WTC11 (cell line): ENCODE measurements at regions of chr17 and their contacts with region 1.

Region 1: GRCh38 chr17:35127751-35128514 is 6.5 kb downstream of the FNDC8 start:
- DNase-seq: no peak
- ATAC-seq: no peak
- H3K4me3 Mint-ChIP-seq: no peak overlapping the region
- H3K27ac Mint-ChIP-seq: no peak overlapping the region
- H3K4me1 Mint-ChIP-seq: no peaks in the 10 kb centered on the region
- H3K27me3 Mint-ChIP-seq: peaks cover 7% of the 10 kb centered on the region
- CTCF ChIP-seq: no peak

Region 2: GRCh38 chr17:35141681-35142466 is 13.9 kb after region 1 on chr17 and contains the start of gene NLE1:
- CTCF ChIA-PET with region 1: interaction called, 13 read pairs
- POLR2A ChIA-PET with region 1: no interaction called
- DNase-seq: peak; percentile 89
- ATAC-seq: peak; percentile 90
- H3K4me3 Mint-ChIP-seq: peak within 1 kb of the TSS; percentile 81
- H3K27ac Mint-ChIP-seq: no peak within 1 kb of the TSS
- H3K4me1 Mint-ChIP-seq: peaks cover 8% of the 10 kb centered on the region
- H3K27me3 Mint-ChIP-seq: no peaks in the 10 kb centered on the region; the same call in 1 of the 2 replicates
- CTCF ChIP-seq: peak; percentile 71
- total RNA-seq, gene NLE1: 44.7 to 52.2 TPM (median 51.0 TPM) in 3 replicates